MCF 10A (cell line): ENCODE measurements at regions of chr14 and their contacts with region 1.

Region 1: GRCh38 chr14:70809543-70810244 is 381 bp upstream of the MAP3K9 start:
- DNase-seq: peak; percentile 99
- H3K4me3 Mint-ChIP-seq: no peak overlapping the region
- H3K27ac Mint-ChIP-seq: no peak overlapping the region
- H3K4me1 Mint-ChIP-seq: peaks cover 6% of the 10 kb centered on the region
- H3K27me3 Mint-ChIP-seq: no peaks in the 10 kb centered on the region
- CTCF ChIP-seq: no peak

Region 2: GRCh38 chr14:70622111-70622712 is 187.5 kb before region 1 on chr14:
- CTCF ChIA-PET with region 1: interaction called, 3 read pairs
- POLR2A ChIA-PET with region 1: no interaction called
- intact Hi-C with region 1: loop called (anchors 2 kb)
- DNase-seq: peak; percentile 71
- H3K4me3 Mint-ChIP-seq: no peak overlapping the region
- H3K27ac Mint-ChIP-seq: no peak overlapping the region
- H3K4me1 Mint-ChIP-seq: no peaks in the 10 kb centered on the region
- H3K27me3 Mint-ChIP-seq: no peaks in the 10 kb centered on the region
- CTCF ChIP-seq: peak; percentile 76

Region 3: DNA sequence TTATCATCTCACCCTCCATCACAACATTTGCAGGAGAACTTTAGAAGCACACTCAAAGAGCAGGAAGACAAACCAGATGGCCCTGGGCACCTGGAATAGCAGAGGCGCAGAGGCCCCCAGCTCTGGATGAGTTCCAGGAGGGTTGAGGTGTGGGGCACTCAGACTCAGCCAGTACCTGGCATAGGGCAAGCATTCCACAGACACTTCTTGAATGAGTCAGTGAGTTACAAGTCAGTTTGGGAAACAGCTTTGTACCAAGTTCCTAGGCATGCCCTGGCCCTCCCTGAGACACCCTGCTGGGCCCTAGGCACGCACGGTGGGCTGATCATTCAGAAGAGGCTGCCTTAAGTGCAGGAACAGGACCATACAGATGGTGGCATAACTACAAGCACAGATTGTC is 54.7 kb before region 1 on chr14:
- CTCF ChIA-PET with region 1: interaction called, 5 read pairs
- POLR2A ChIA-PET with region 1: interaction called, 69 read pairs
- intact Hi-C with region 1: loop called (anchors 1 kb)
- DNase-seq: peak; percentile 94
- H3K4me3 Mint-ChIP-seq: no peak overlapping the region
- H3K27ac Mint-ChIP-seq: peak overlapping the region; percentile 89
- H3K4me1 Mint-ChIP-seq: peaks cover 24% of the 10 kb centered on the region
- H3K27me3 Mint-ChIP-seq: no peaks in the 10 kb centered on the region
- CTCF ChIP-seq: no peak

Region 4: DNA sequence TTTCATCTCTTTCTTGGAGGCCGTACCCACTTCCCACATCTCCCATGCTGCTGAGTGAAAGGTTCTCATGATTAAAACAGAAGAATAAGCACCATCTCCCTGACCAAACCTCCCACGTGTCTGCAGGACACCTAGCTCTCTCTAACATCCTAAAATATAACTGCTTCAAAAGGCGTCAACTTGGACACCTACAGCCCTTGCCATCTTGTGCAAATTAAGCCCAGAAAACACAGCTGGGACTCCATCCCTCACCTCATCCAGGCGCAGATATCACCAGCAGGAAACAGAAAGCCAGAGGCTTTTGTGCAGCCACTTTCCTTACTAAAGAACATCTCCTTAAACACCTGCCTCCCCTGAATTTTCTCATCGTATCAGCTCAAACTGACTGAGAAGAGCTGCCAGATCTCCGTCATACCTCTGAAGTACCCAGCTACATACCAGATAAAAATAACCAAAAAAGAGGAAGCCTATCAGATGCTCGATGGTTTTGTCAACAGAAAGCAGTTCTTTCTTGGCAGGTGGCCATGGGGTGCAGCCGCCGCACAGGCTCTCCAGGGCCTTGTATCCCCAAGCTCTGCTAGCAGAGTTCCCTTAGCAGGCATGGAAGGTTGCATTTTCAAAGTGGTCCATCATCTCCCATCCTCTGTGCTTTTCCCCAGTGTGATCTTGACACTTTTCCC is 29.2 kb before region 1 on chr14:
- CTCF ChIA-PET with region 1: interaction called, 5 read pairs
- POLR2A ChIA-PET with region 1: interaction called, 31 read pairs
- intact Hi-C with region 1: loop called (anchors 2 kb)
- DNase-seq: no peak
- H3K4me3 Mint-ChIP-seq: no peak overlapping the region
- H3K27ac Mint-ChIP-seq: peak overlapping the region; percentile 56
- H3K4me1 Mint-ChIP-seq: peaks cover 34% of the 10 kb centered on the region
- H3K27me3 Mint-ChIP-seq: no peaks in the 10 kb centered on the region
- CTCF ChIP-seq: no peak

Region 5: GRCh38 chr14:70821584-70822529 is 12.2 kb after region 1 on chr14:
- CTCF ChIA-PET with region 1: interaction called, 18 read pairs
- POLR2A ChIA-PET with region 1: interaction called, 9 read pairs
- intact Hi-C with region 1: no loop called
- DNase-seq: peak; percentile 50
- H3K4me3 Mint-ChIP-seq: peak overlapping the region; percentile 76
- H3K27ac Mint-ChIP-seq: peak overlapping the region; percentile 19
- H3K4me1 Mint-ChIP-seq: no peaks in the 10 kb centered on the region
- H3K27me3 Mint-ChIP-seq: no peaks in the 10 kb centered on the region
- CTCF ChIP-seq: no peak